B cell (primary cell): ENCODE measurements at regions of chr6 and their contacts with region 1.

Region 1: GRCh38 chr6:26234421-26235296 is 130.3 kb upstream of the BTN3A2 start:
- DNase-seq: peak; percentile 87
- ATAC-seq: peak; percentile 76
- H3K4me3 ChIP-seq: peak overlapping the region; percentile 70 to 99 (median 85)
- H3K4me3 Mint-ChIP-seq: peak overlapping the region; percentile 93
- H3K27ac ChIP-seq: peak overlapping the region; percentile 86 to 90
- H3K27ac Mint-ChIP-seq: peak overlapping the region; percentile 95
- H3K4me1 ChIP-seq: peaks cover 13 to 21% of the 10 kb centered on the region in 2 donors
- H3K4me1 Mint-ChIP-seq: peaks cover 23% of the 10 kb centered on the region
- H3K27me3 ChIP-seq: no peaks in the 10 kb centered on the region
- H3K27me3 Mint-ChIP-seq: no peaks in the 10 kb centered on the region
- CTCF ChIP-seq: no peak

Region 2: GRCh38 chr6:25889877-25890853 is 344.5 kb before region 1 on chr6:
- CTCF ChIA-PET with region 1: no interaction called
- POLR2A ChIA-PET with region 1: no interaction called
- intact Hi-C with region 1: no loop called
- DNase-seq: no peak
- ATAC-seq: no peak
- H3K4me3 ChIP-seq: no peak overlapping the region
- H3K4me3 Mint-ChIP-seq: no peak overlapping the region
- H3K27ac ChIP-seq: no peak overlapping the region
- H3K27ac Mint-ChIP-seq: no peak overlapping the region
- H3K4me1 ChIP-seq: no peaks in the 10 kb centered on the region
- H3K4me1 Mint-ChIP-seq: no peaks in the 10 kb centered on the region
- H3K27me3 ChIP-seq: no peaks in the 10 kb centered on the region
- H3K27me3 Mint-ChIP-seq: peaks cover 13% of the 10 kb centered on the region
- CTCF ChIP-seq: no peak

Region 3: GRCh38 chr6:26183581-26184366 is 50.9 kb before region 1 on chr6:
- CTCF ChIA-PET with region 1: interaction called, 4 read pairs
- POLR2A ChIA-PET with region 1: interaction called, 20 read pairs
- intact Hi-C with region 1: no loop called
- DNase-seq: peak; percentile 84
- ATAC-seq: peak; percentile 89
- H3K4me3 ChIP-seq: peak overlapping the region; percentile 51 to 73 (median 71)
- H3K4me3 Mint-ChIP-seq: peak overlapping the region; percentile 91
- H3K27ac ChIP-seq: peak overlapping the region in 1 of 2 donors; percentile 61
- H3K27ac Mint-ChIP-seq: peak overlapping the region; percentile 85
- H3K4me1 ChIP-seq: peaks cover 13 to 22% of the 10 kb centered on the region in 2 donors
- H3K4me1 Mint-ChIP-seq: peaks cover 25% of the 10 kb centered on the region
- H3K27me3 ChIP-seq: no peaks in the 10 kb centered on the region
- H3K27me3 Mint-ChIP-seq: no peaks in the 10 kb centered on the region
- CTCF ChIP-seq: no peak

Region 4: GRCh38 chr6:26223650-26224546 is 10.8 kb before region 1 on chr6:
- CTCF ChIA-PET with region 1: interaction called, 21 read pairs
- POLR2A ChIA-PET with region 1: interaction called, 142 read pairs
- intact Hi-C with region 1: loop called (anchors 1 kb)
- DNase-seq: peak; percentile 81
- ATAC-seq: peak; percentile 87
- H3K4me3 ChIP-seq: peak overlapping the region; percentile 56 to 97 (median 75)
- H3K4me3 Mint-ChIP-seq: no peak overlapping the region
- H3K27ac ChIP-seq: peak overlapping the region; percentile 85 to 95
- H3K27ac Mint-ChIP-seq: no peak overlapping the region
- H3K4me1 ChIP-seq: peaks cover 4 to 14% of the 10 kb centered on the region in 2 donors
- H3K4me1 Mint-ChIP-seq: peaks cover 8% of the 10 kb centered on the region
- H3K27me3 ChIP-seq: no peaks in the 10 kb centered on the region
- H3K27me3 Mint-ChIP-seq: no peaks in the 10 kb centered on the region
- CTCF ChIP-seq: no peak